ENCODE measurements at regions of chr15 and their contacts with region 1.

Region 1: GRCh38 chr15:75479670-75480069 is 28.2 kb upstream of the SIN3A start:
- DNase-seq: no peak
- ATAC-seq: no peak
- H3K4me3 ChIP-seq: no peak overlapping the region
- H3K27ac ChIP-seq: no peak overlapping the region
- H3K4me1 ChIP-seq: peaks cover 0 to 5% (median 0%) of the 10 kb centered on the region in 12 donors
- H3K27me3 ChIP-seq: no peaks in the 10 kb centered on the region
- CTCF ChIP-seq: no peak
- POLR2A ChIP-seq: no peak

Region 2: DNA sequence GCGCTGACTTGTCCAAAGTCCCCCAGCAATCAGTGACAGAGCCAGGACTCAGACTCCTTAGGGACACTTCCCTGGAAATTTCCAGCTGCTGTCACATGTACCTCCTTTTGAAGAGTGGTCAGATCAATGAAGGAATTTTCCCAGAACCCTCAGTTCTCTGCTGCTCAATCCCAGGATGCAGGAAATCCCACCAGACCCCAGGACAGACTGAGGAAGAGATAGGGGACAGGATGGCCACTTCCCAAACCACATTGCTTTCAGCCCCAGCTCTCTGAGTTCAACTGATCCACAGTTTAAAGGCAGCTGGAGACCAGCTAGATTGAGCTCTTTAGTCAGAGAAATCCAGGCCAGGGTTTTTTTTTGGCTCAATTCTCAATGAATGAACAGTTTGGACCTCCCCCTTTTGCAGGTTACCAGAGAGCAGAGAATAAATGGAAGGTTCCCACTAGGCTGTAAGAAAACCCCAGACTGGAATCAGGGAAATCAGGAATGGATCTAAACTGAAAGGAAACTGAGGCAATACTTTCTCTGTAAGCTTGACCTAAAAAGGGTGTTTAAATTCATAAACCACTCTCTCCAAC is 755.8 kb before region 1 on chr15:
- intact Hi-C with region 1: no loop called
- DNase-seq: no peak
- ATAC-seq: peak in 3 of 4 donors; percentile 36 to 66 (median 40)
- H3K4me3 ChIP-seq: no peak overlapping the region
- H3K27ac ChIP-seq: no peak overlapping the region
- H3K4me1 ChIP-seq: peaks cover 0 to 30% (median 14%) of the 10 kb centered on the region in 12 donors
- H3K27me3 ChIP-seq: peaks cover 0 to 23% (median 0%) of the 10 kb centered on the region in 9 donors
- CTCF ChIP-seq: no peak
- POLR2A ChIP-seq: no peak

Region 3: GRCh38 chr15:75420698-75421097 is 59.0 kb before region 1 on chr15:
- intact Hi-C with region 1: no loop called
- DNase-seq: no peak
- ATAC-seq: no peak
- H3K4me3 ChIP-seq: no peak overlapping the region
- H3K27ac ChIP-seq: no peak overlapping the region
- H3K4me1 ChIP-seq: no peaks in the 10 kb centered on the region
- H3K27me3 ChIP-seq: no peaks in the 10 kb centered on the region
- CTCF ChIP-seq: no peak
- POLR2A ChIP-seq: no peak

Region 4: GRCh38 chr15:75597667-75598341 is 118.1 kb after region 1 on chr15:
- intact Hi-C with region 1: no loop called
- DNase-seq: no peak
- ATAC-seq: peak in 1 of 4 donors; percentile 19
- H3K4me3 ChIP-seq: no peak overlapping the region
- H3K27ac ChIP-seq: peak overlapping the region in 2 of 12 donors; percentile 5 to 18
- H3K4me1 ChIP-seq: peaks cover 0 to 19% (median 10%) of the 10 kb centered on the region in 12 donors
- H3K27me3 ChIP-seq: no peaks in the 10 kb centered on the region
- CTCF ChIP-seq: peak in 10 of 12 donors; percentile 13 to 47 (median 26)
- POLR2A ChIP-seq: no peak

Region 5: DNA sequence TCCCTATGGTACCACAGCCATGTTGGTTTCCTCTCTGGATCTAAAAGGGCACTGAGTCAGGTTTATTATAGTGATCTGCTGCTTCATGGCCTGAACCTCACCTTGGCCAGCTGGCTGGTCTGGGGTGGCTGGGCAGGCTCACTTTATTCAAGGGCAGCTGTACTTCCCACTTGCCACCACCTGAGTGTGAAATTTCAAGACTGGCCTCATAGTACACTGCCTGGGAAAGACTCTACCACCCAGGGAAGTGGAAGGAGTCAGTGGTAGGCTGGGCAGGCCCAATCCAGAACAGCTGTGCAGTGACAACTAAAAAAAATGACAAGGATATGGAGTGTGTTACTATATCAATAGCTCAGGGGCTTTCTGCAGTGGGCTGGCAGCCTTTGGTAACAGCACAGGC is 137.1 kb after region 1 on chr15:
- intact Hi-C with region 1: loop called in 1 of 10 experiments (anchors 10 kb)
- DNase-seq: no peak
- ATAC-seq: no peak
- H3K4me3 ChIP-seq: no peak overlapping the region
- H3K27ac ChIP-seq: no peak overlapping the region
- H3K4me1 ChIP-seq: peaks cover 0 to 26% (median 16%) of the 10 kb centered on the region in 12 donors
- H3K27me3 ChIP-seq: no peaks in the 10 kb centered on the region
- CTCF ChIP-seq: no peak
- POLR2A ChIP-seq: no peak

Region 6: GRCh38 chr15:75801859-75802593 is 322.4 kb after region 1 on chr15:
- intact Hi-C with region 1: no loop called
- DNase-seq: peak; percentile 78 to 92 (median 84)
- ATAC-seq: peak; percentile 93 to 99 (median 98)
- H3K4me3 ChIP-seq: peak overlapping the region in 8 of 12 donors; percentile 11 to 40 (median 29)
- H3K27ac ChIP-seq: no peak overlapping the region
- H3K4me1 ChIP-seq: peaks cover 0 to 16% (median 4%) of the 10 kb centered on the region in 12 donors
- H3K27me3 ChIP-seq: peaks cover 0 to 27% (median 0%) of the 10 kb centered on the region in 9 donors
- CTCF ChIP-seq: peak; percentile 79 to 98 (median 92)
- POLR2A ChIP-seq: no peak

Measured in heart left ventricle (tissue), 16 donors.